ENCODE measurements at regions of chr7 and their contacts with region 1.

Region 1: DNA sequence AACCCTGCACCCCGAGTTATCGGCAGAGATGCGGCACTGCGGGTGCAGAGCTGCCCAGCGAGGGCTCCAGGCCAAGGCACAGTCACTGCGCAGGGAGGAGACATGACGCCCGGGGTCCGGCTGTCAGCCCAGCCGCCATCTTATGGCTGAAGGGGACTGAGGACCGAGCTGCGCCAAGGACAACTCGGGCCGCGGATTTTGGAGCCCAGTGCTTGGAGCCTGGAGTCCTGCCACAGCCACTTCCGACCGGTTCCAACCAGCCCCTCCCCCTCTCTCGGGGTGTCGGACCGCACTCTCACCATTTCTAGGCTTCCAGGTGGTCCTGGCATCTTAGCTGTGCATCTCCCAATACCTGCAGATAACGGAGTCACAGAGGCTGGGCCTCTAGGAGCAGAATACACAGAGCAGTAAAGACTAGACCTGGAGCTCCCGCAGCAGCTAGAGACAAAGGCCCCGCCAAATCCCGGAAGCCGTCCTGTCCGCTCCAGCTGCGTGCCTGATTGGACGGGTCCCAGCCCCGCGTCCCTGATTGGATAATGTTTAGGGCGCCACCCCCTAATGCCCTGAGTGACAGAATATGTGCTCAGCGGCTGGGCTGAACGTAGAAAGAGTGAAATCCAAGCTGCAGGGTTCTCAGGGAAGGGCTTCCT is at the start of gene ZNF680:
- DNase-seq: peak; percentile 97
- H3K4me3 Mint-ChIP-seq: peak within 1 kb of the TSS; percentile 93
- H3K27ac Mint-ChIP-seq: peak within 1 kb of the TSS; percentile 93
- H3K4me1 Mint-ChIP-seq: peaks cover 27% of the 10 kb centered on the region
- H3K27me3 Mint-ChIP-seq: no peaks in the 10 kb centered on the region
- CTCF ChIP-seq: no peak
- total RNA-seq, gene ZNF680: 6.0 and 11.7 TPM in 2 replicates

Region 2: DNA sequence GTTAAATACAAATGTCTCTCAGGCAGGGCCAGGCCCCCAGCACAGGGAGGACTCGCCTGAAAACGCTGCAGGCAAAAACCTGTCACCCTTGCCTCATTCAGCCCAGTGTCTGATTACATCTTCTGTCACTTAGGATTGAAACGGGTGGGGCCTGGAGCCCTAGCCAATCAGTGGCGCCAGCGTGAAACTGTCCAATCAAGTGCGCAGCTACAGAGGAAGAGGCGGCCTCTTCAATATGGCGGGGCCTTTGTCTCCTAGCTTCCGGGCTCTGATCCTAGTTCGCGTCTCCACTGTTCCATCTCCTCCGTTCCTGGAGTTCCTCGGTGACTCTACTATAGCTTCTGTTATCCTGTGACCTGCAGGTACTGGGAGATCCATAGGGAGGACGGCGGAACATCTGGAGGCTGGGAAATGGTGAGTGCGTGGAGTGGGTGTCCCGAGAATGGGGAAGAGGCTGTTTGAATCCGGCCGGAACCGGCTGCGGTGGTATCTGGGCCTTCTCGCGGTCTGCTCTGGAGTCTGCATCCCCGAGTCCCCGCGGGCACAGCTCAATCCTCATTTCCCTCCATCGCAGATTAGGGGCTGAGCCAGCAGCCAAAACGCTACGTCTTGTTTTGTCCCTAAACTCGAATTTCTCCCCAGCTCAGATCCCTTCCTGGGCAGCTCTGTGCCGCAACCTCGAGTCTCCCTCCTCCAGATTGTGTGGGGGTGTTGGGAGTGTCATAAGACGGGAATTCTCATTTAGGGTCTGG is 248.8 kb before region 1 on chr7 and contains the start of gene ZNF736:
- CTCF ChIA-PET with region 1: no interaction called
- POLR2A ChIA-PET with region 1: interaction called, 11 read pairs
- intact Hi-C with region 1: no loop called
- DNase-seq: peak; percentile 97
- H3K4me3 Mint-ChIP-seq: peak within 1 kb of the TSS; percentile 97
- H3K27ac Mint-ChIP-seq: peak within 1 kb of the TSS; percentile 99
- H3K4me1 Mint-ChIP-seq: no peaks in the 10 kb centered on the region
- H3K27me3 Mint-ChIP-seq: no peaks in the 10 kb centered on the region
- CTCF ChIP-seq: no peak
- total RNA-seq, gene ZNF736: 9.2 and 13.1 TPM in 2 replicates

Region 3: DNA sequence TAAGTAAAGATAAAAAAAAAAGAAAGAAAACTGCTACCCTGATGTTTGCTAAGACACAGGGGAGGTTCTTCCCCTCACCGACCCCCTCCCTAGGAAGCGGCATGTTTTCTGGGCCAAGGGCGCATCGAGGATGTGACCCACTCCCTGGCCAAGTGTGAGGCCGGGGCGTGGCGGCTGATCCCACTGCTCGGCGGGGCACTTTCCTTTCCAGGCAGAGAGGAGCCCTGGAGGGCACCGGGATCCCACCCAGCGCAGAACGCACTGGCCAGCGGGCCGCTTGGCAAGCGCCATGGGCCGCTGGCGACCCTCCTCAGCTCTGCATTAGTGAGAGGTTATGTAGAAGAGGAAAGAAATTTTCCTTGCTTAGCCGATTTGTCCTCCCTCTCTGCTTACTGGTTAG is 155.6 kb before region 1 on chr7:
- CTCF ChIA-PET with region 1: no interaction called
- POLR2A ChIA-PET with region 1: no interaction called
- intact Hi-C with region 1: no loop called
- DNase-seq: no peak
- H3K4me3 Mint-ChIP-seq: no peak overlapping the region
- H3K27ac Mint-ChIP-seq: no peak overlapping the region
- H3K4me1 Mint-ChIP-seq: no peaks in the 10 kb centered on the region
- H3K27me3 Mint-ChIP-seq: no peaks in the 10 kb centered on the region
- CTCF ChIP-seq: no peak

Region 4: DNA sequence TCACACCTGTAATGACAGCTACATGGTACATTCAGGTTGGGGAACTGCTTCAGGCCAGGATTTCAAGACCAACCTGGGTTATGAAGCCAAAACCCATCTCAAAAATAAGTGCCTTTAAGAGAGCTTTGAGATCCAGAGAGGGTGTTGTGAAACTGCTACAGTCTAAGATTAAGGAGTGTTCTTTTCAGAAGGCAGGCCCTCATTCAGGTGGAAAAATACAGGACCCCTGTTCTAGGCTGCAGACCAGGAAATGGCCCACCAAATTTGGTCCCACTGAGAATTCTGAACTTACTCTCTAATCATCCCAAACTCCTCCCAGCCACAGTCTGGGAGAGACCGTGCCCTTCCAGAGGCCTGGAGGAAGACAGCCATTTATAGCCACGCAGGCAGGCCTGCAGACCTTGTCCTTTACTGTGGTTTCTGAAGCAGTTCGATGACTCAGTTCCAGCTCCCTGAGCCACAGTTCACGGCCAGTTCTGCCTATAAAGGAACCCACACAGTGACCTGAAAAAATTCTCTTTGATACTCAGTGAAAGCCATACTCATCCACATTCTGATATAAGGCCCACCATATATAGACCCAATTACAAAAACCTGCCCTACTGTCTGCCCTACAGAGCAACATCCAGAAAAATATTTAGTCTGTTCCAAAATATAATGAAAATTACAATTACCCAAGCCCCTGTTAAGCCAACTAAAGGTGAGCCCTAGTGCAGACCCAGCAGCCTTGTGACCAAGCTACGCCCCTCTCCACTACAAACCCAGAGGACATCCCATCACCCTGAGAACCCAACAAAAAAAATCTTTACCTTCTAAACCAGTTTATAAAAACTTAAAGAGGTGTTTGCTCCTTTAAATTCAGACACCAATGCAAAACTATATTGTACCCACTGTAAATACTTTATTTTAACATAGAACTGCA is 21.1 kb before region 1 on chr7:
- CTCF ChIA-PET with region 1: interaction called, 4 read pairs
- POLR2A ChIA-PET with region 1: interaction called, 15 read pairs
- intact Hi-C with region 1: no loop called
- DNase-seq: peak; percentile 61
- H3K4me3 Mint-ChIP-seq: no peak overlapping the region
- H3K27ac Mint-ChIP-seq: peak overlapping the region; percentile 87
- H3K4me1 Mint-ChIP-seq: peaks cover 6% of the 10 kb centered on the region
- H3K27me3 Mint-ChIP-seq: no peaks in the 10 kb centered on the region
- CTCF ChIP-seq: no peak

Region 5: GRCh38 chr7:64551375-64552142 is 11.2 kb before region 1 on chr7:
- CTCF ChIA-PET with region 1: no interaction called
- POLR2A ChIA-PET with region 1: interaction called, 10 read pairs
- intact Hi-C with region 1: no loop called
- DNase-seq: no peak
- H3K4me3 Mint-ChIP-seq: no peak overlapping the region
- H3K27ac Mint-ChIP-seq: no peak overlapping the region
- H3K4me1 Mint-ChIP-seq: no peaks in the 10 kb centered on the region
- H3K27me3 Mint-ChIP-seq: no peaks in the 10 kb centered on the region
- CTCF ChIP-seq: no peak

Region 6: GRCh38 chr7:64665980-64666662 is 103.4 kb after region 1 on chr7 and contains the start of gene ZNF107:
- CTCF ChIA-PET with region 1: interaction called, 3 read pairs
- POLR2A ChIA-PET with region 1: interaction called, 11 read pairs
- intact Hi-C with region 1: no loop called
- DNase-seq: peak; percentile 94
- H3K4me3 Mint-ChIP-seq: peak within 1 kb of the TSS; percentile 94
- H3K27ac Mint-ChIP-seq: peak within 1 kb of the TSS; percentile 83
- H3K4me1 Mint-ChIP-seq: peaks cover 12% of the 10 kb centered on the region
- H3K27me3 Mint-ChIP-seq: no peaks in the 10 kb centered on the region
- CTCF ChIP-seq: no peak
- total RNA-seq, gene ZNF107: 4.6 and 5.0 TPM in 2 replicates

Region 7: GRCh38 chr7:65820287-65820950 is 1257.7 kb after region 1 on chr7:
- CTCF ChIA-PET with region 1: no interaction called
- POLR2A ChIA-PET with region 1: no interaction called
- intact Hi-C with region 1: no loop called
- DNase-seq: no peak
- H3K4me3 Mint-ChIP-seq: no peak overlapping the region
- H3K27ac Mint-ChIP-seq: no peak overlapping the region
- H3K4me1 Mint-ChIP-seq: no peaks in the 10 kb centered on the region
- H3K27me3 Mint-ChIP-seq: no peaks in the 10 kb centered on the region
- CTCF ChIP-seq: no peak